Activated T-helper 2 cell treated with anti-CD3 and anti-CD28 coated beads, Interferon-gamma antibody, Interleukin-2, Interleukin-4, amounts not matched to agents 10 μg/mL and 5 μg/mL and 100 μg/mL, durations not matched to agents 14 hours and 24 hours and 36 hours (primary cell): ENCODE measurements at regions of chr7 and their contacts with region 1.

Region 1: DNA sequence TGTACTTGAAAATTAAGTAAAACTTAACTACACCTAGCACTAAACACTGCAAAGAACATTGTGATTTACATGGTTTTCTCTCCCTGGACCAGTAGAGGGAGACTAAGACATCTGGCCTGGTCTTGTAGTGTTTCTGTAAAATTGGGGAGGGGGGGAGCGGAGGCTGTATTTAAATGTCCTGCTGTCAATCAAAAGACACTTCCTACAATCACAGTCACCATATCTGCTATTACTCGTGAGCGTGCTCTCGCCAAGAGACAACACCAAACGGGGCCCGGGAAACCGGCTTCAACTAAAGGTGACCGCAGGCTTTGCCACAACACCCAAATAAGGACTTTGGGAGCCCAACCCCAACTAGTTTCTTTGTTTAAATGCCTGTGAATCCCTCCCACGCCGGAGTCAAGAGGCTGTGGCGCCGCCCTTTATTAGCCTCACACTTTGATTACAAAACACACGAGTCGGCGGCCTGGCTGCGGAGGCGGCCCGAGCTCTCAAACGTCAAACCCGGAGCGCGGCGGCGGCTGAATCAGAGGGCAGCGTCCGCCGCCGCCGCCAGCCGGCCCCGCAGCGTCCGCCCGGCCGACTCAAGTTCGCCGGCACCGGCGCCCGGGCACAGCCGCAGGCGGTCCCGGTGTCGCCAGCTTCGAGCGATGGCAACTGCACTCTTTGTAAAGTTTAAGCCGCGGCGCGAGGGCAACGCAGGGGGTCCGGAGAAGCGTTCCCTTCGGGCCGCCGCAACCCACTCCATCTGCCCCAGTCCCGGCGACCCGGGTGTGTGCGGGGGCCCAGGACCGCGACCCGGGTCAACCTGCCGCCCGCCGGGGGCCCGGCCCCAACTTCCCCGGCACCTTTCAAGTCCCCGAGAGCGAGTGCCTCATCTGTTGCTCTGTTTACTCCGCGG is 1.3 kb downstream of the KDM7A start:
- DNase-seq: peak; percentile 93
- H3K4me3 Mint-ChIP-seq: peak overlapping the region; percentile 73
- H3K27ac Mint-ChIP-seq: peak overlapping the region; percentile 86
- H3K4me1 Mint-ChIP-seq: peaks cover 38% of the 10 kb centered on the region
- H3K27me3 Mint-ChIP-seq: no peaks in the 10 kb centered on the region

Region 2: GRCh38 chr7:139109188-139109982 is 1066.1 kb before region 1 on chr7 and contains the start of gene ZC3HAV1:
- intact Hi-C with region 1: loop called (anchors 5 kb)
- DNase-seq: peak; percentile 90
- H3K4me3 Mint-ChIP-seq: peak within 1 kb of the TSS; percentile 100
- H3K27ac Mint-ChIP-seq: peak within 1 kb of the TSS; percentile 98
- H3K4me1 Mint-ChIP-seq: peaks cover 30% of the 10 kb centered on the region
- H3K27me3 Mint-ChIP-seq: no peaks in the 10 kb centered on the region
- total RNA-seq, gene ZC3HAV1: 76.0 and 77.1 TPM in 2 replicates

Region 3: DNA sequence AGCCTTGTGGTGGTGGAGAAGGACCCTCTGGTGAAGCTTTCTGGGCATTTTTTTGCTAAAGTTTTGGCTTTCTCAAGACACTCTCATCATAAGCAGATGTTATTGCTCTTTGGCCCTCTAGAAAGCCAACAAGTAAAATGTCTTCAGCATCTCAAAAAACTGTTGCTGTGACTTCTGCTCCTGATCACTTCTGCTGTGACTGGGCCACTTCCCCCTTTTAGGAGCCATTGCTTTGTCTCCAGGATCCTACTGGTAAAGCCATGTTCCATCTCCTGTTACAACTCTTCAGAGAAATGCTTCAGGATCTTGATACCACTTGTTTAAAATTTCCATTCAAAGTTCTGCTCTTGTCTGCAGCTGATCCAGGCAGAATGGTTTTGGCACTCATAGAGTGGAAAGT is 123.7 kb before region 1 on chr7:
- intact Hi-C with region 1: no loop called
- DNase-seq: no peak
- H3K4me3 Mint-ChIP-seq: no peak overlapping the region
- H3K27ac Mint-ChIP-seq: no peak overlapping the region
- H3K4me1 Mint-ChIP-seq: peaks cover 21% of the 10 kb centered on the region
- H3K27me3 Mint-ChIP-seq: no peaks in the 10 kb centered on the region

Region 4: GRCh38 chr7:140062528-140063299 is 112.8 kb before region 1 on chr7 and contains the start of gene PARP12:
- intact Hi-C with region 1: loop called (anchors 2 kb)
- DNase-seq: peak; percentile 88
- H3K4me3 Mint-ChIP-seq: peak within 1 kb of the TSS; percentile 81
- H3K27ac Mint-ChIP-seq: peak within 1 kb of the TSS; percentile 71
- H3K4me1 Mint-ChIP-seq: peaks cover 39% of the 10 kb centered on the region
- H3K27me3 Mint-ChIP-seq: peaks cover 4% of the 10 kb centered on the region
- total RNA-seq, gene PARP12: 23.6 and 24.6 TPM in 2 replicates

Region 5: DNA sequence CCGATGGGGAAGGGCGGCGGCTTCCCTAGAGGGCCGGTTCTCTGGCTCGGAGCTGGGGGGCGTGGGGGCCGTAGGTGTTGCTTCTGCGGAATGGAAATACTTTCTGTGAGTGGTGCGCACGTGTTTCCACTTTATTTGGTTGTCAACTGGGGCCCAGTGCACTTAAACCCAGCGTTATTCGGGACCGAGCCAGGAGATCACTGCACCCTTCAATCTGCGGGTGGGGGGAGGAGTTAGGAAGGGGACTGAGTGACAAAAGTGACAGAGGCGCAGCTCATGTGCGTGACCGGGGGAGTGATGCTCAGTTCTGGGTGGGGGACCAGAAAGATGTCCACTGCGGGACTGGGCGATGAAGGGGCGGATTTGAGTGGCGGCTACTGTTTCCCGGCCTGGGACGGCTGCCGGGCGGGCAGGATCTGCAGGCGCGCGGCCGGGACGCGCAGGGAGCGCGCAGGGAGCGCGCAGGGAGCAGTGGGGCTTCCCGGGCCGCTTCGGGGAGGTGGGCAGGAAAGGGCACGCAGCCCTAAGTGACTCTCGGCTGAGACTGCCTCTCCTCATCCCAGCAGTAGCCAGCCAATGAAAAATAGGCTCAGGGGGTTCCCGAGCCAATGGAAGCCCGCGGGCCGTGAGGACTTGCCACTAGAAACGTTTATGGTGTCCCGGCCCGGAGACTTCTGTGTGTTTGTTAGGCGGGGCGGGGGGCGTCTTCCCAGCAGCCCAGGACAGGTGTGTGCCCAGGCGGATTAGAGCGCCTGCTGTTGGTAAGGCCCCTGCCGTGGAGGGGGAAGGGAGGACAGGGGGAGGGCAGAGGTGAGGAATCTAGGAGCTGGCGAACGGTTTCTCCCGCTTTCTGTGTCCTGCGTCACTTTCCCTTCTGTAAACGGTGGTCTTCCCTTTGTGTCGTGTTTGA is 55.6 kb after region 1 on chr7:
- intact Hi-C with region 1: loop called (anchors 1 kb)
- DNase-seq: peak; percentile 45
- H3K4me3 Mint-ChIP-seq: peak overlapping the region; percentile 86
- H3K27ac Mint-ChIP-seq: peak overlapping the region; percentile 92
- H3K4me1 Mint-ChIP-seq: peaks cover 27% of the 10 kb centered on the region
- H3K27me3 Mint-ChIP-seq: no peaks in the 10 kb centered on the region

Region 6: GRCh38 chr7:140304191-140304799 is 128.8 kb after region 1 on chr7:
- intact Hi-C with region 1: loop called (anchors 1 kb)
- DNase-seq: peak; percentile 35
- H3K4me3 Mint-ChIP-seq: no peak overlapping the region
- H3K27ac Mint-ChIP-seq: peak overlapping the region; percentile 82
- H3K4me1 Mint-ChIP-seq: peaks cover 7% of the 10 kb centered on the region
- H3K27me3 Mint-ChIP-seq: no peaks in the 10 kb centered on the region

Region 7: DNA sequence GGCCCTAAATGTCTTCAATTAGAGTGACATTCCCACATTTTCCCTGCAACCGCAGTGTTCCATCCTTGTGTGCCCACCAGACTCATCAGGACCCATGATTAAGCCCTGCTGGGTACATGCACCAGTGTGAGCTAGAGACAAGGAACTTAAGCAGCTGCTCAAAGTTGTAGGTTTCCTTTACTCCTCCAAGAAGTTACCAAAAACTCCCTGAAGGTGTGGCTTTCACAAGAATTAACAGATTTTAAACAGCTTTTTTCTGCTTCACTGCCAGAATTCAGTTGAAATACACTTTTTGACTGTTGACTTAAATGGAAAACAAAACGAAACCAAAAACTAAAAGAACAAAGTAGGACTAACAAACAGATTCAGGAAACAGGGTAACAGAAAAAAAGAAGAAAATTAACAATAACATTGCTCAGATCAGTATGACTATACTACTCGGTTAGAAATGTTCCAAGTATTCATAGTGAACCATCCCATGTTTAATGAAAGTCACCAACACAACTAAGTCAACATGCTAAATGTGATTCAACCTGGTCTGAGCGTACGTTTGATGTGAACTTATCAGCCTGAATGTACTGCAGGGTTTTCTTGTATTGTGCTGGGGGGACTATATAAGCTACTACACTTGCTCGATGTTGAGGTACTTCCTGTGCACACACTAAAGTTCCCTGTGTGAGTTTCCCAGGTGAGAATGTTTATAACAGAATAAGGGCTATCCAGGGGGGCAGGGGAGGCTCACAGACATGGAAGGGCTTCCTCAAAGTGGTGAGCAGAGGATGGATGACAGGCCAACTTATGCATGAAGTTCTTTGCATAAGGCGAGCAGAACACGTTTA is 200.6 kb after region 1 on chr7:
- intact Hi-C with region 1: loop called (anchors 1 kb)
- DNase-seq: peak; percentile 26
- H3K4me3 Mint-ChIP-seq: peak overlapping the region; percentile 65
- H3K27ac Mint-ChIP-seq: peak overlapping the region; percentile 97
- H3K4me1 Mint-ChIP-seq: peaks cover 51% of the 10 kb centered on the region
- H3K27me3 Mint-ChIP-seq: no peaks in the 10 kb centered on the region

Region 8: GRCh38 chr7:140479062-140479738 is 303.7 kb after region 1 on chr7 and contains the start of gene MKRN1:
- intact Hi-C with region 1: loop called (anchors 5 kb)
- DNase-seq: peak; percentile 89
- H3K4me3 Mint-ChIP-seq: peak within 1 kb of the TSS; percentile 97
- H3K27ac Mint-ChIP-seq: peak within 1 kb of the TSS; percentile 96
- H3K4me1 Mint-ChIP-seq: peaks cover 25% of the 10 kb centered on the region
- H3K27me3 Mint-ChIP-seq: no peaks in the 10 kb centered on the region
- total RNA-seq, gene MKRN1: 72.9 and 73.6 TPM in 2 replicates